Mammary epithelial cell (primary cell): ENCODE measurements at regions of chrX and their contacts with region 1.

Region 1: DNA sequence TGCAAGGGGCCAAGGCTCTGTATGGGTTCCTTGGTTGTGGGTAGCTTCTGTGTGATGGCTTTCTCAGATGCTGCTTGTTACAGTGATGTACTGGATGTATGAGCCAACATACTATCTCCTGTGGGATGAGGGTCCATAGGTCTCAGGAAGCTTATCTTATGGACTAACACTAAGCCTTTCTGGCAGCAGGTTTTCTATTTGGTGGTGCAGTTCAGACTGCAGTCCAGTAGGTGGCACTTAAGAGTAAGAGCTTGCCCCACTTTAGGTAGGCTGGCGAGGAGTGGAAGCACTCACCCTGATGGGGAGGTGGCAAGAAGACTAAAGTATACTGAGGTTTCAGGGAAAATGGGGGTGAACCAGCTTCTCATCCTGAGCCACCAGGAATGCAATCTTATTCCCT is 306.7 kb upstream of the MAOA start:
- DNase-seq: peak; percentile 32
- H3K4me3 ChIP-seq: no peak overlapping the region
- H3K27ac ChIP-seq: no peak overlapping the region
- H3K4me1 ChIP-seq: no peaks in the 10 kb centered on the region
- H3K27me3 ChIP-seq: peaks cover 8% of the 10 kb centered on the region
- CTCF ChIP-seq: peak; percentile 86 to 93

Region 2: DNA sequence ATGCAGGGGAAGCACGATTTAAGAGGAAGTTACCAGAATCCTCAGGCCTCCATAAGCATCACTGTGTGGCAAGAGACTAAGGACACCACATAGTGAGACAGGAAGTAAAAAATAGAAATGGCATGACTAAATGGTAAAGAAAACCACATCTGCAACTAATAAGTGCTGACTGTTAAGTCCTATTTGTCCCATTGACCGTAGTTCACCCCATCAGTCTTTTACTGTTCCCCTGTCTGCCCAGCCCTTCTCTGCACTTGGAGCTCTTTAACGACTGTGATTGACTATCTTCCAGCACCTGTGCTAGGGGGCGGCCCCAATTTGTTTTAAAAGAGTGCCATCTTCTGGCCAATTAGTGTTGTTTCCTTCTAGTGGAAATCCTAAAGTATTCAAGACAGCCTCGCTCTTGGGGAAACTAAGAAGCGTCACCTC is 400.9 kb after region 1 on chrX:
- CTCF ChIA-PET with region 1: no interaction called
- dilution Hi-C with region 1: no loop called
- in situ Hi-C with region 1: loop called (anchors 25 kb)
- intact Hi-C with region 1: loop called (anchors 1 kb)
- DNase-seq: peak; percentile 51
- H3K4me3 ChIP-seq: no peak overlapping the region
- H3K27ac ChIP-seq: no peak overlapping the region
- H3K4me1 ChIP-seq: no peaks in the 10 kb centered on the region
- H3K27me3 ChIP-seq: no peaks in the 10 kb centered on the region
- CTCF ChIP-seq: peak; percentile 47 to 52

Region 3: GRCh38 chrX:43822015-43822414 is 472.7 kb after region 1 on chrX:
- CTCF ChIA-PET with region 1: no interaction called
- dilution Hi-C with region 1: no loop called
- in situ Hi-C with region 1: no loop called
- intact Hi-C with region 1: loop called (anchors 5 kb)
- DNase-seq: peak; percentile 40
- H3K4me3 ChIP-seq: no peak overlapping the region
- H3K27ac ChIP-seq: no peak overlapping the region
- H3K4me1 ChIP-seq: no peaks in the 10 kb centered on the region
- H3K27me3 ChIP-seq: peaks cover 6% of the 10 kb centered on the region
- CTCF ChIP-seq: no peak